ENCODE measurements at regions of chr5 and their contacts with region 1.

Region 1: GRCh38 chr5:169116961-169117461 is 183.9 kb downstream of the SLIT3 start:
- DNase-seq: peak in 1 of 2 donors; percentile 27
- ATAC-seq: peak; percentile 43 to 85 (median 70)
- H3K4me3 ChIP-seq: no peak overlapping the region
- H3K27ac ChIP-seq: no peak overlapping the region
- H3K4me1 ChIP-seq: peaks cover 0 to 15% (median 5%) of the 10 kb centered on the region in 9 donors
- H3K27me3 ChIP-seq: no peaks in the 10 kb centered on the region
- CTCF ChIP-seq: peak in 6 of 9 donors; percentile 10 to 40 (median 30)

Region 2: GRCh38 chr5:169197343-169197742 is 80.3 kb after region 1 on chr5:
- intact Hi-C with region 1: loop called in 1 of 10 experiments (anchors 5 kb)
- DNase-seq: peak in 1 of 2 donors; percentile 20
- ATAC-seq: peak; percentile 49 to 85 (median 67)
- H3K4me3 ChIP-seq: no peak overlapping the region
- H3K27ac ChIP-seq: no peak overlapping the region
- H3K4me1 ChIP-seq: peaks cover 0 to 10% (median 0%) of the 10 kb centered on the region in 9 donors
- H3K27me3 ChIP-seq: peaks cover 0 to 5% (median 0%) of the 10 kb centered on the region in 7 donors
- CTCF ChIP-seq: peak; percentile 12 to 61 (median 49)

Region 3: DNA sequence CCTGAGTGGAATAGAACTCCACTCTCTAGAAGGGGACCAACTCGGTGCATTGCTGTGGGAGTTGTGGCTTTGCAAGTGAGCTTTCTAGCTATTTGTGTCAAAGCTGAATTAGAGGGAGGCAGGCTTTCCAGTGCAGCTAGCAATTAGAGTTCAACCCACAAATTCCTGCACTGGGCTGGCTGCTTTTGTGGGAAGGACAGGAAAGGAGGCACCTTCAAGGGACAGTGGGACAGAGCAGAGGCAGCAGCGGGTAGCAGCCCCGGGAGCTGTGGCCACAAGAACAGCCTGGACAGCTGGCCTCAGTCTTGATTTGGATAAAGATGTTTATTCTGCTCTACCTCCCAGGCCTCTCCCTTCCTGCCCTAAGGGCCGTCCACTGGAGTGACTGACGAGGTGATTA is 267.6 kb after region 1 on chr5:
- intact Hi-C with region 1: no loop called
- DNase-seq: no peak
- ATAC-seq: no peak
- H3K4me3 ChIP-seq: no peak overlapping the region
- H3K27ac ChIP-seq: no peak overlapping the region
- H3K4me1 ChIP-seq: no peaks in the 10 kb centered on the region
- H3K27me3 ChIP-seq: peaks cover 0 to 6% (median 0%) of the 10 kb centered on the region in 7 donors
- CTCF ChIP-seq: no peak

Region 4: DNA sequence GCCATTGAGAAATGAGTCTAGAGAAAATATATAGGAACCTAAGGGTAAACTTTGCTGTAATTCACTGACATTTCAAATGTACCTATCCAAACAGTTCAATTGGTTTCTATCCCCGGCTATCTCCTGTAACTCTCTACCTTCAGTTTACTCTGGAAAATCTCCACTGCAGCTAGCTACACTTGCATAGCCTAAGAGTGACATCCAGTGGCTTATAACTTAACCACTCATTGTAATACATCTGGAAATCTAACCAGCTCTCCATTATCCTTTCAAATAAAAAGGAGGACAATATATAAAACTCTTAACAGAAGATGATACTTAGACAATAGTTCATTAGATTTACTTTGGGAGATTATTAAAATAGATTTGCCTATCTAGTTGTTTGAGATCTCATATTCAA is 431.3 kb after region 1 on chr5:
- intact Hi-C with region 1: loop called in 2 of 10 experiments (anchors 10 kb)
- DNase-seq: no peak
- ATAC-seq: peak in 6 of 8 donors; percentile 52 to 83 (median 70)
- H3K4me3 ChIP-seq: no peak overlapping the region
- H3K27ac ChIP-seq: no peak overlapping the region
- H3K4me1 ChIP-seq: peaks cover 0 to 9% (median 0%) of the 10 kb centered on the region in 9 donors
- H3K27me3 ChIP-seq: peaks cover 0 to 38% (median 22%) of the 10 kb centered on the region in 7 donors
- CTCF ChIP-seq: peak in 8 of 9 donors; percentile 21 to 70 (median 52)